Panc1 (cell line): ENCODE measurements at regions of chr9 and their contacts with region 1.

Region 1: DNA sequence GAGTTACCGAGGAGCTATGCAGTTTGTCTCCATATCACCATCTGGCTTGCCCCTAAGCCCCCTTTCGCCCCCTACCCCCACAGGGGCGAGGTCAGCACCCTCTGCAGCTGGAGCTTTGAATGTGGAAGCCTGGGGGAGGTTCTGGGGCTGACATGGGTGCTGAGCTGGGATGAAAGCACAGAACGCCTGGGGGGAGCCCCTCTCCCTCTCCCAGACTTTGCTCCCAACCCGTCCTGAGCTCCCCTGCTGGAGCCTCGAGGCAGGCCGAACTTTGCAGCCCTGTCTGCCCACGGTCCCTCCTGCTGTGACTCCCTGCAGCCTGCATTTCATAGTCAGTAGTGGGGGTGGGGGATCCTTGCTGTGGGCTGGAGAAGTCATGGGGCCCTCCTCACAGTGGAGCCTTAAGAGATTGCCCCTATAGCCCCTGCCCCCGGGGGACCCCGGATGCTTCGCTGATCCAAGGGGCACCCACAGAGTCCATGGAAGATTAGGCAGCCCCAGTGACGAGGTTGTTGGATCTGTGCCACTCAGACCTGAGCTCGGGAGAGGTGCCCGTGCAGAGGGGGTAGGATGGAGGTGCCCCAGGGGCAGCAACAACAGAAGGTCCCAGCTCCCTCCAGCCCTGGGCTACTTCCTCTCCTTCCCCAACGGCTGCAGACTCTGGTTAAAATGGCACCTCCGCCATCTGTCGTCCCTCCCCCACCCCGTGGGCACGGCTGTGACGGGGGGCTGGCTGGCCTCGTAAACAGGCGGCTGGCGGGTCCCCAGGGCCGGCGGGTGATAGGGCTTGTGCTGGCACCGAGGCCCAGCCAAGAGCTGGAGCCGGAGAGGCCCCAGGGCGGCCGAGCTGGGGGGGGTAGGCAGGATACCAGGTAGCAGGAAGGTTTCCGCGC is 162.0 kb downstream of the C9orf50 start:
- DNase-seq: no peak
- ATAC-seq: peak; percentile 58
- H3K4me3 ChIP-seq: no peak overlapping the region
- H3K27ac ChIP-seq: peak overlapping the region; percentile 87
- H3K4me1 ChIP-seq: peaks cover 42% of the 10 kb centered on the region
- H3K27me3 ChIP-seq: no peaks in the 10 kb centered on the region
- CTCF ChIP-seq: no peak

Region 2: GRCh38 chr9:129237195-129237611 is 221.7 kb before region 1 on chr9:
- CTCF ChIA-PET with region 1: no interaction called
- POLR2A ChIA-PET with region 1: no interaction called
- in situ Hi-C with region 1: no loop called
- intact Hi-C with region 1: no loop called
- DNase-seq: no peak
- ATAC-seq: peak; percentile 79
- H3K4me3 ChIP-seq: peak overlapping the region in 1 of 2 experiments; percentile 16; a peak in 1 of 4 replicates
- H3K27ac ChIP-seq: no peak overlapping the region
- H3K4me1 ChIP-seq: peaks cover 7% of the 10 kb centered on the region
- H3K27me3 ChIP-seq: no peaks in the 10 kb centered on the region
- CTCF ChIP-seq: no peak

Region 3: DNA sequence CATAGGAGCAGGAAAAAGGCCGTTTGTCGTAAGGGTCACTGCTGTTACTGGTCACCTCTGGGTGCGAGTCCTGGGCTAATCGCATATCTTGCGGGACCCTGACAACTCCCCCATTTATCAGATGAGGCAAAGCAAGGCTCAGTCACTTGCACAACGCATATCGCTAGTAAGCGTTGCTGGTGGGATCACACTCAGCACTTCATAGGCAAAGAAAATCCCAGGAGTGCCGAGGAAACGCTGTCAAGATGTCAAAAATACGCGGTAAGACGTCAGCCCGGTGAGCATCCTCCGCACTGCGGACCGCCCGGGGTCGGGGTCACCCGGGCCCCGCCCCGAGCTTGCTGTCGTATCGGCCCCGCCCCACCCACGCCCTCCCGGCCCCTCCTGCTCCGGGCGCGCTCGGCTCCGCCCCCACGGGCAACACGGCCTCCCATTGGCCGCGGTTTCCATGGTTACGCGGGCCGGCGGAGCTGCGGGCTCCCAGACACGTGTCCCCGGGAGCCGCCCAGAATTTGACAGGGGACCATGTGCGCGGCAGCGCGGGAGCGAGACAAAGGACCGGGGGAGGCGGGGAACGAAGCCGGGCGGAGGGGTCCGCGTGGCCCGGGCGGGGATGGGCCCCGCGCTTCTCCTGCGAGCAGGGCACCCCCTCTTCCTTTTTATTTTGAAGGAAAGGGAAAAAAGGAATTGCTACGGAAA is 200.6 kb before region 1 on chr9:
- CTCF ChIA-PET with region 1: no interaction called
- POLR2A ChIA-PET with region 1: no interaction called
- in situ Hi-C with region 1: no loop called
- intact Hi-C with region 1: no loop called
- DNase-seq: peak; percentile 17
- ATAC-seq: peak; percentile 96
- H3K4me3 ChIP-seq: peak overlapping the region; percentile 29 to 63
- H3K27ac ChIP-seq: peak overlapping the region; percentile 51; the same call in 1 of the 2 replicates
- H3K4me1 ChIP-seq: peaks cover 6% of the 10 kb centered on the region
- H3K27me3 ChIP-seq: no peaks in the 10 kb centered on the region
- CTCF ChIP-seq: no peak

Region 4: GRCh38 chr9:129441852-129442251 is 17.1 kb before region 1 on chr9:
- CTCF ChIA-PET with region 1: no interaction called
- POLR2A ChIA-PET with region 1: interaction called, 13 read pairs
- in situ Hi-C with region 1: no loop called
- intact Hi-C with region 1: no loop called
- DNase-seq: no peak
- ATAC-seq: no peak
- H3K4me3 ChIP-seq: no peak overlapping the region
- H3K27ac ChIP-seq: no peak overlapping the region
- H3K4me1 ChIP-seq: peaks cover 17% of the 10 kb centered on the region
- H3K27me3 ChIP-seq: no peaks in the 10 kb centered on the region
- CTCF ChIP-seq: no peak